Lower leg skin (tissue), 4 donors: ENCODE measurements at regions of chr18 and their contacts with region 1.

Region 1: GRCh38 chr18:39513186-39513585 is 1947.6 kb upstream of the CELF4 start:
- DNase-seq: no peak
- H3K4me3 ChIP-seq: no peak overlapping the region
- CTCF ChIP-seq: no peak
- POLR2A ChIP-seq: no peak

Region 2: DNA sequence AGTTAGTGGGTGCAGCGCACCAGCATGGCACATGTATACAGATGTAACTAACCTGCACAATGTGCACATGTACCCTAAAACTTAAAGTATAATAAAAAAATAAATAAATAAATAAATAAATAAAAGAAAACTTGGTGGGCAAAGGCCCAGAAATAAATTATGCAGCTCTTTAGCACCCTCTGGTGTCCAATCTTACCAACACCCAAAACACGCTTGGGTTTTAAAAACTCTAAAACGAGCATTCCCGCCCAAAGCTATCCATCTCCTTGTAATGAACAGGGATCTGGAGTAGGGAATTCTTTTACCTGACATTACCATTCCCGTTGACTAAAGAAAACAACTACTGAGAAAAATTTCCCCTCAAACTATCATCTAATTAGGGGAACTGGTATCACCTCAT is 58.3 kb after region 1 on chr18:
- intact Hi-C with region 1: loop called (anchors 10 kb)
- DNase-seq: no peak
- H3K4me3 ChIP-seq: no peak overlapping the region
- CTCF ChIP-seq: no peak
- POLR2A ChIP-seq: no peak